Activated CD4-positive, alpha-beta memory T cell treated with anti-CD3 and anti-CD28 coated beads for 36 hours (primary cell): ENCODE measurements at regions of chr14 and their contacts with region 1.

Region 1: DNA sequence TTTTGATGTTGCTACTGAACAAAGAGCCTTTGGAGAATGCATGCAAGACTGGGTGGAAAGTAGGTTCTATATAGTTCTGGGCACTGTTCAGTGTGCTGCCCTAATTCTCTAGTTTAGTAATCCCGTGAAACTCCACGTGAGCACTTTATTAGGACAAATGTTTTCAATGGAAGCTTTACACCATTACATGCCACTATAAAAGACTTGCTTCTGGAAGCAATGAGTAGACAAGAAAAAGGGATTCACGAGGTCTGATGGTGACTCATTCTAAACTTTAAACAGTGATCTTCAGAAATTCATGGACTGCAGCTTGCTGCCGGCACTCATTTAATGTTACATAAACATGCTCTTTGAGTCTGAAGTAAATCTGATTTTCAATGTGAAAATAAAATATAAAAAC is 22.3 kb downstream of the ATG14 start:
- DNase-seq: no peak
- H3K4me3 Mint-ChIP-seq: no peak overlapping the region
- H3K27ac Mint-ChIP-seq: peak overlapping the region; percentile 53
- H3K4me1 Mint-ChIP-seq: peaks cover 49% of the 10 kb centered on the region
- H3K27me3 Mint-ChIP-seq: no peaks in the 10 kb centered on the region

Region 2: GRCh38 chr14:55373784-55374705 is 15.3 kb before region 1 on chr14:
- CTCF ChIA-PET with region 1: interaction called, 5 read pairs
- POLR2A ChIA-PET with region 1: interaction called, 8 read pairs
- intact Hi-C with region 1: loop called (anchors 1 kb)
- DNase-seq: peak; percentile 45
- H3K4me3 Mint-ChIP-seq: peak overlapping the region; percentile 49
- H3K27ac Mint-ChIP-seq: peak overlapping the region; percentile 91
- H3K4me1 Mint-ChIP-seq: peaks cover 45% of the 10 kb centered on the region
- H3K27me3 Mint-ChIP-seq: no peaks in the 10 kb centered on the region

Region 3: DNA sequence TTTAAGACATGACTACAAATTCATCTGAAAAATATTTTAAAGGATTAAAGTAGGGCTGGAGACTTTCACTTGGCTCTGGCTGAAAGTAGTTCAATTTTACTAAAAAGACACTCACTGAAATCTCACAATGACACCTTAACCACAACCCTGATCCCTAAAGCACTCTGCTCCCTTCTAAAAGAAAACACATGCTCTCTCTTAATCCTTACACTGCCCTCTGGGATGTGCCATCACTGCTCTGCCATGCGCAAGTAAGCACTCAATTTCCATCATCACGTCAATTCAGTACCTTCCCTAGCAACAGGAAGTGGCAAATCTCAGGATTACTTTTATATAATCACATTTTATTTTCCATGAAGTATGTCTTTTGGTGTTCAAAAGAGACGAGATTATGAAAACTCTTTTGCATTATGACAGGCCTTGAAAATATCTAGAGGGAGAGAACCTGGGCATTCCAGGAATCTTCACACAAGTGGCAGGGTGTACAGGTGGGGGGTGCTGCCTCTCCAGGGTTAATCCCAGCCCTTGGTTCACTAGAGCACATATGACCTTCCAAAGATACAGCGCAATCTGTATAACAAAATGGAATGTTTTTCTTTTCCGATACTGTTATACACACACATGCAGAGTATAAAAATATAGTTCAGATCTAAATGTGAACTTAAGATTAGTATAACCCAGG is 15.0 kb after region 1 on chr14:
- CTCF ChIA-PET with region 1: no interaction called
- POLR2A ChIA-PET with region 1: no interaction called
- intact Hi-C with region 1: loop called (anchors 1 kb)
- DNase-seq: no peak
- H3K4me3 Mint-ChIP-seq: no peak overlapping the region
- H3K27ac Mint-ChIP-seq: peak overlapping the region; percentile 38
- H3K4me1 Mint-ChIP-seq: peaks cover 49% of the 10 kb centered on the region
- H3K27me3 Mint-ChIP-seq: no peaks in the 10 kb centered on the region

Region 4: GRCh38 chr14:55579724-55580469 is 190.6 kb after region 1 on chr14 and contains the start of gene KTN1:
- CTCF ChIA-PET with region 1: no interaction called
- POLR2A ChIA-PET with region 1: no interaction called
- intact Hi-C with region 1: loop called (anchors 1 kb)
- DNase-seq: peak; percentile 87
- H3K4me3 Mint-ChIP-seq: peak within 1 kb of the TSS; percentile 92
- H3K27ac Mint-ChIP-seq: peak within 1 kb of the TSS; percentile 90
- H3K4me1 Mint-ChIP-seq: peaks cover 31% of the 10 kb centered on the region
- H3K27me3 Mint-ChIP-seq: no peaks in the 10 kb centered on the region
- total RNA-seq, gene KTN1: 126 to 134 TPM

Region 5: DNA sequence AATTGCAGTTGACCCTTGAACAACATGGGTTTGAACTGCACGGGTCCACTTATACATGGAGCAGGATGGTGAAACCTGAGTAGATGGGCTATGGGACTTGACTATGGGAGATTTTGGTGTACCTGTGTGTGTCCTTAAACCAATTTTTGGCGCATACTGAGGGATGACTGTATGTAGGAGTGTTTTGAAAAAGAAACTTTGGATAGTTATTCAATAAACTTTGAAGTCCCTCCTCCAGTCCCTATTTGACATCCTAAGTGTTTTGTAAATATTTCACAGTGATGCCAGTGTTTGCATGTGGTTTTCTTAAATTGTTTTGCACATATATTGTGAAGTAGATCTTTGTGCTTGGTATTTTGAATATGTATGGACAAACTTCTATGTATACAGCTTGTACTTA is 203.1 kb after region 1 on chr14:
- CTCF ChIA-PET with region 1: no interaction called
- POLR2A ChIA-PET with region 1: no interaction called
- intact Hi-C with region 1: no loop called
- DNase-seq: no peak
- H3K4me3 Mint-ChIP-seq: no peak overlapping the region
- H3K27ac Mint-ChIP-seq: no peak overlapping the region
- H3K4me1 Mint-ChIP-seq: peaks cover 51% of the 10 kb centered on the region
- H3K27me3 Mint-ChIP-seq: no peaks in the 10 kb centered on the region